Astrocyte of the cerebellum (primary cell): ENCODE measurements at regions of chr20 and their contacts with region 1.

Region 1: GRCh38 chr20:6265204-6265904 is 142.5 kb upstream of the FERMT1 start:
- DNase-seq: peak; percentile 89
- H3K4me3 ChIP-seq: no peak overlapping the region
- CTCF ChIP-seq: peak; percentile 56

Region 2: GRCh38 chr20:6164421-6165341 is 100.7 kb before region 1 on chr20:
- in situ Hi-C with region 1: no loop called
- DNase-seq: peak; percentile 33
- H3K4me3 ChIP-seq: no peak overlapping the region
- CTCF ChIP-seq: no peak

Region 3: GRCh38 chr20:6339176-6339575 is 73.8 kb after region 1 on chr20:
- in situ Hi-C with region 1: loop called (anchors 5 kb)
- DNase-seq: no peak
- H3K4me3 ChIP-seq: no peak overlapping the region
- CTCF ChIP-seq: no peak

Region 4: DNA sequence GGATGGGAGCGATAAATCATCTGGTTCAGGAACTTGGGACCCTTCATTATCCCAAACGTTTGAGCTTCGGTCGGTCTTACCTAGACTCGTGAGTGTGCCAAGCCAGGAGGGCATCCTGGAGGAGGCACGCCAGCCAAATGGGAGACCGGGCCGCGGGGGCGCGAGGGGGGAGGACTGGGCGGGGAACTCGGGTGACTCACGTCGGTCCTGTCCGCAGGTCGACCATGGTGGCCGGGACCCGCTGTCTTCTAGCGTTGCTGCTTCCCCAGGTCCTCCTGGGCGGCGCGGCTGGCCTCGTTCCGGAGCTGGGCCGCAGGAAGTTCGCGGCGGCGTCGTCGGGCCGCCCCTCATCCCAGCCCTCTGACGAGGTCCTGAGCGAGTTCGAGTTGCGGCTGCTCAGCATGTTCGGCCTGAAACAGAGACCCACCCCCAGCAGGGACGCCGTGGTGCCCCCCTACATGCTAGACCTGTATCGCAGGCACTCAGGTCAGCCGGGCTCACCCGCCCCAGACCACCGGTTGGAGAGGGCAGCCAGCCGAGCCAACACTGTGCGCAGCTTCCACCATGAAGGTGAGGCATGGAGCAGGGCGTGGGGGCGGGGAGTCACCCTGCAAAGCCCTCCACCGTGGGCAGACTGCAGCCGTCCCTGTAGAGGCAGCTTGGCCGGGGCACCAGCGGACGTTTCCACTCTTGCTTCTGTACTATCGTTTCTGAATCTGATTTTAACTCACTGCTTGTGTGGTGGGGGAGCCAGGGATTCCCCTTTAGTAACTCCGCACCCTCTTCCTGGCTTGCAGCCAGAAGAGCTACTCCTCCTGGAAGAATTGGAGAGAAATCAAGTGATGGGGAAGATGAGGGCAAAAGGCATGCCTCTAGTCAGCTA is 504.8 kb after region 1 on chr20:
- in situ Hi-C with region 1: loop called (anchors 5 kb)
- DNase-seq: no peak
- H3K4me3 ChIP-seq: peak overlapping the region; percentile 66
- CTCF ChIP-seq: no peak